ENCODE measurements at regions of chr4 and their contacts with region 1.

Region 1: DNA sequence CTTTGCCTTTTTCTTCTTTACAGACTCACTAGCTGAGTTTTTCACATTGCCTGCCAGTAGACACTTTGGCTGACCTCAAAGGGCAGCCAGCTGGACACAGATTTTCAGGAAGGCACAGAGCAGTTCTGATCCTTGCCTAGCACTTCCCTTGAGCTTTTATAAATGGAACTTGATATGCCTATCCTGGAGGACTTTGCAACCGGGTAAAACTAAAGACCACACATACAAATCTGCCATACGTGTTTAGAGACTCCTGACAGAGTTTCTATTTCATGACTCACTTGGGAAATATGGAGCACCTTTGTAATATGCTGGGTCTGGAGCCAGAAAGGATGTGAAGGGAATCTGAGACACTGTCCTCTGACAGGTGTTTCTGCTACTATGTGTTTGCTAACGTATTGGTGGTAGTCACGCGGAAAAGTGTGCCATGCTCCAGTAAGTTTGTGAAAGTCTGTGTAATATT is 56.7 kb upstream of the RASSF6 start:
- DNase-seq: peak; percentile 10 to 51
- ATAC-seq: peak; percentile 57 to 66; a peak in 4 of 6 replicates
- H3K4me3 ChIP-seq: no peak overlapping the region
- H3K27ac ChIP-seq: peak overlapping the region; percentile 59 to 71
- H3K4me1 ChIP-seq: peaks cover 48% of the 10 kb centered on the region
- CTCF ChIP-seq: no peak
- EP300 ChIP-seq: peak; percentile 63 to 69; a peak in 3 of 5 replicates
- POLR2A ChIP-seq: no peak
- RAD21 ChIP-seq: no peak; a peak in 1 of 5 replicates

Region 2: DNA sequence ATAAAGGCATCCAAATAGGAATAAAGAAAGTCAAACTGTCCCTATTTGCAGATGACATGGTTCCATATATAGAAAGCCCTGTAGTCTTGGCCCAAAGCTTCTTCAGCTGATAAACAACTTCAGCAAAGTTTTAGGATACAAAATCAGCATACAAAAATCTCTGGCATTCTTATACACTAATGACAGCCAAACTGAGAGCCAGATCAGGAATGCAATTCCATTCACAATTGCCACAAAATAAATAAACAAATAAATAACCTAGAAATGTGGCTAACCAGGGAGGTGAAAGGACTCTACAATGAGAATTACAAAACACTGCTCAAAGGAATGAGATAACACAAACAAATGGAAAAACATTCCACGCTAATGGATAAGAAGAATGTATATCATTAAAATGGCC is 10.5 kb after region 1 on chr4:
- CTCF ChIA-PET with region 1: interaction called, 12 read pairs
- POLR2A ChIA-PET with region 1: no interaction called
- DNase-seq: no peak
- ATAC-seq: no peak
- H3K4me3 ChIP-seq: no peak overlapping the region
- H3K27ac ChIP-seq: no peak overlapping the region
- H3K4me1 ChIP-seq: peaks cover 39% of the 10 kb centered on the region
- CTCF ChIP-seq: no peak
- EP300 ChIP-seq: no peak
- POLR2A ChIP-seq: no peak
- RAD21 ChIP-seq: no peak

Region 3: DNA sequence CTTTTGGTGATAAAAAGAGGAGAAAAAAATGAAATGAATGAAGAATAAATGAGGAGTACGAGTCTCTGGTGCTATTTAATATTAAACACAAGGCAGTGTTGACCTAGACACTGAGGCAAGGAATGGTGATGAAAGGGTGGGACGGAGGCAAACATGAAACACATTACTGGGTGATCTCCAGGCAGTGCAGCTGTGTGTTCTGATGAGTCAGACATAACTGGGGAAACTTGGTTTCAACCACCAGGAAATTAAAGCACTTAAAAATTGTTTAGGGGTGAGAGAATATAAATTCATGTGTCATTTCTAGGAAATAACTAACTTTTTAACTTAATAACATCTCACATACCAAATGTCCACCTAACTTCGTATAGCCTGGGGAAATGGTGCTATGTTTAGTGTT is 139.9 kb after region 1 on chr4:
- CTCF ChIA-PET with region 1: no interaction called
- POLR2A ChIA-PET with region 1: no interaction called
- DNase-seq: peak in 1 of 2 experiments; percentile 66
- ATAC-seq: peak; percentile 66 to 74; a peak in 4 of 6 replicates
- H3K4me3 ChIP-seq: no peak overlapping the region
- H3K27ac ChIP-seq: peak overlapping the region; percentile 68 to 83
- H3K4me1 ChIP-seq: peaks cover 20% of the 10 kb centered on the region
- CTCF ChIP-seq: no peak
- EP300 ChIP-seq: peak in 1 of 2 experiments; percentile 27; a peak in 2 of 5 replicates
- POLR2A ChIP-seq: no peak
- RAD21 ChIP-seq: no peak

Region 4: DNA sequence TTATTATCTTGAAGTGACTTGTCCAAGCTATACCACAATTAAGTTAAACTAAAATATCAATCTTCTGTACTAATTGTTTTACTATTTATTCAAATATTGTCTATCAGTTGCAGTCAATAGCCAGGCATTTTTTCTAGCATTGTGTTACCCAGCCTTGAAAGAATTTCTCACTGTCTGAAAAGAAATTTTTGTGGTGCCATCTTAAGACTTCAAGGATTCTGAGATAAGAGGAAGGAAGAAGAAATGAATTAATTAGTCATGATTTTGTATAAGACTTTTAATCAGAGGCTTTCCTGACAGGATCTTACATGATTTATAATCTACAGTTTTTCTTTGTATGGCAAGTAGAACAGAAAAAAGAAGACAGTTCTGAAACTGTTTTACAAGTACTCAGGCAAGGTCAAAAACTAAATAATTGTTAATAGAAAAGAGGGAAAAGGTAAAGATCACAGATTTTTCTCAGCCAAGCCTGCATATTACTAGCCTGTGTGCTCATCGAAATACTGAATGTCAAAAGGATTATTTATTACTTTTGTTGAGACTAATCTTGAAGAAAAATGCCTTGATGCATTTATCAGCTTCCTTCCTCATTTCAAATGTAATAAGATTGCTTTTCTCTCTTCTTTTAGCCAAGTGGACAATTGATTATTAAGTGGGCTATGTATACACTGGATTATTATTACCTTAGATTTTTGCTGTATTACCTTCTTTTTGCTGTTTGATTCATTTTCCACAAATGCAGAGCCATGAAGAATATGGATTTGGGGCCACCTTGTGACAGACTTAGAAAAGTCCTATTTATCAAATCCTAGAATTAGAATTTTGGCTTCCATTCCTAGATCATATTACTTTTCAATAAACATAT is 246.1 kb after region 1 on chr4:
- CTCF ChIA-PET with region 1: interaction called, 12 read pairs
- POLR2A ChIA-PET with region 1: no interaction called
- DNase-seq: peak in 1 of 2 experiments; percentile 47
- ATAC-seq: no peak
- H3K4me3 ChIP-seq: no peak overlapping the region
- H3K27ac ChIP-seq: peak overlapping the region; percentile 38 to 46; a peak in 3 of 6 replicates
- H3K4me1 ChIP-seq: peaks cover 12% of the 10 kb centered on the region
- CTCF ChIP-seq: peak; percentile 76
- EP300 ChIP-seq: no peak
- POLR2A ChIP-seq: no peak
- RAD21 ChIP-seq: peak; percentile 82 to 88